Activated CD8-positive, alpha-beta T cell treated with anti-CD3 and anti-CD28 coated beads, Interleukin-2, amount 10 ng/mL, durations not matched to agents 7 days and 5 days (primary cell): ENCODE measurements at regions of chr3 and their contacts with region 1.

Region 1: GRCh38 chr3:156674046-156674910 is at the start of gene TIPARP:
- DNase-seq: peak; percentile 99
- ATAC-seq: peak; percentile 81
- H3K4me3 Mint-ChIP-seq: peak within 1 kb of the TSS; percentile 95
- H3K27ac Mint-ChIP-seq: peak within 1 kb of the TSS; percentile 98
- H3K4me1 Mint-ChIP-seq: peaks cover 41% of the 10 kb centered on the region
- H3K27me3 Mint-ChIP-seq: no peaks in the 10 kb centered on the region
- total RNA-seq, gene TIPARP: 34.2 to 36.5 TPM

Region 2: DNA sequence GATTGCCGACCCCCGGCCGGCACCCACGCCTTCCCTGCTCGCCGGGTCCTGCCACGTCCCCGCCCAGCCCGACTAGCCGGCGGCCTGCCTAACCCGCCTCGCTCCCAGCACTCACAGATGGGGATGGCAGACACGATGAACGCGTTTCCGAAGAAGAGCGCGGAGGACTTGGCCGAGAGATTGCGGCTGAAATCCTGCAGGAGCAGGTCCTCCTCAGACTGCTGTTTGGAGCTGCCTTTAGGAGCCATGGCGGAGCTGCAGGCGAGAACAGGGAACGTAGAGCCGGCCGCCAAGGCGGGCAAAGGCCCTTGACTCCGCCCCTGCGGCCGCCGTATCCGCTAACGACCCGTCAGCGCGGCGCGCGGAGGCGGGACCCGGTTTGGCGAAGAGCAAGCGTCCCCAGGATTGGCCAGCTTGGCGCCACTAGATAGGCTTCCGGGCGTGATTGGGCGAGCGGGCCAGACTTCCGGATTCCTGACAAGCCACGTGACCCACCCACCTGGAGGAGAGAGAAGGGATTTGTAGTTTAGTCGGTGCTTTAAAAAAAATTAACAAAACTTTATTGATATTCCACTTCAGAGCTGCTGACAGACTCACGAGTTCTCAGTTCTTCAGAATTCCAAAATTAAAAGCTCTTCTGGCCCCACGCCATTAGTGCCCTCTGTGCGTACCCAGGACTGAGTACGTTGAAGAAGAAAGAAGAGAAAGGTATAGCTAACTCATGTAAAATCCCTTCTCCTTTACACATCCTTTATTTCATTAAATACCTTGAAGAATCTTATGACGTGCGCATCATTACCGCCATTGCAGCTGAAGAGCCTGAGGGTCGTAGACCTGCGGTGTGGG is 119.2 kb before region 1 on chr3 and contains the start of gene SSR3:
- CTCF ChIA-PET with region 1: interaction called, 45 read pairs
- POLR2A ChIA-PET with region 1: interaction called, 41 read pairs
- DNase-seq: peak; percentile 99
- ATAC-seq: peak; percentile 100
- H3K4me3 Mint-ChIP-seq: peak within 1 kb of the TSS; percentile 97
- H3K27ac Mint-ChIP-seq: peak within 1 kb of the TSS; percentile 93
- H3K4me1 Mint-ChIP-seq: peaks cover 49% of the 10 kb centered on the region
- H3K27me3 Mint-ChIP-seq: no peaks in the 10 kb centered on the region
- total RNA-seq, gene SSR3: 133 to 147 TPM

Region 3: DNA sequence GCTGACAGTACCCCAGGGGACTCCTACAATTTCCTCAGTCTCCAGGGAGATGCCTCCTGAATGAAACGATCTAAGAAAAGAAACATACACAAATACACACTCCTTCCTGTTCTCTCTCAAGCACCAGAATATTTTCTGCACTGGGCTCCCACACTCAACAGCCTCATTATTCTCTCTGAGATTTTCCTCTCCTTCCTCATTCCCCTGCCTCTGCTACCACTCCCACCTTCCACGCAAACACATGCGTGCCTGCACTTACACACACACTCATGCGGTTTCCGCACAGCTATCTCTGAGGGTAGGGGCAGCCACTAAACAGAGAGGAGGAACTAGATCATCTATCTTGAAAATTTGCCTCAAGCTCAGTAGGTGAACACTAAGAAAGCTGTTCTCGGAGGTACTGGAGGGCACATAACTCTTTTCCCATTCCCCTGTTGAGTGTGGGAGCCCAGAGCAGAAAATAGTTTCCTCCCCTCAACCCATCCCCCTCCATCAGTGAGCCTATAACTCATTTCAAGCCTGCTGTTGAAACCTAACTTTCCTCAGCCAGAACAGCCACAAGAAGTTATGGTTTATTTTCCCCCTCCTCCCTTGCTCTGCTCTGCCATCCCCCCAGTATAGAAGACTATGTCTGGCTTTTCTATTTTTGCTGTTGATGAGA is 30.4 kb before region 1 on chr3:
- CTCF ChIA-PET with region 1: interaction called, 35 read pairs
- POLR2A ChIA-PET with region 1: interaction called, 8 read pairs
- DNase-seq: peak; percentile 74
- ATAC-seq: peak; percentile 92
- H3K4me3 Mint-ChIP-seq: peak overlapping the region; percentile 48
- H3K27ac Mint-ChIP-seq: peak overlapping the region; percentile 85
- H3K4me1 Mint-ChIP-seq: peaks cover 31% of the 10 kb centered on the region
- H3K27me3 Mint-ChIP-seq: peaks cover 2% of the 10 kb centered on the region

Region 4: GRCh38 chr3:156705761-156706631 is 31.7 kb after region 1 on chr3:
- CTCF ChIA-PET with region 1: no interaction called
- POLR2A ChIA-PET with region 1: no interaction called
- DNase-seq: no peak
- ATAC-seq: no peak
- H3K4me3 Mint-ChIP-seq: no peak overlapping the region
- H3K27ac Mint-ChIP-seq: no peak overlapping the region
- H3K4me1 Mint-ChIP-seq: peaks cover 44% of the 10 kb centered on the region
- H3K27me3 Mint-ChIP-seq: no peaks in the 10 kb centered on the region

Region 5: GRCh38 chr3:156816800-156817645 is 142.7 kb after region 1 on chr3:
- CTCF ChIA-PET with region 1: interaction called, 6 read pairs
- POLR2A ChIA-PET with region 1: interaction called, 14 read pairs
- DNase-seq: peak; percentile 93
- ATAC-seq: peak; percentile 86
- H3K4me3 Mint-ChIP-seq: peak overlapping the region; percentile 88
- H3K27ac Mint-ChIP-seq: peak overlapping the region; percentile 97
- H3K4me1 Mint-ChIP-seq: peaks cover 71% of the 10 kb centered on the region
- H3K27me3 Mint-ChIP-seq: no peaks in the 10 kb centered on the region

Region 6: DNA sequence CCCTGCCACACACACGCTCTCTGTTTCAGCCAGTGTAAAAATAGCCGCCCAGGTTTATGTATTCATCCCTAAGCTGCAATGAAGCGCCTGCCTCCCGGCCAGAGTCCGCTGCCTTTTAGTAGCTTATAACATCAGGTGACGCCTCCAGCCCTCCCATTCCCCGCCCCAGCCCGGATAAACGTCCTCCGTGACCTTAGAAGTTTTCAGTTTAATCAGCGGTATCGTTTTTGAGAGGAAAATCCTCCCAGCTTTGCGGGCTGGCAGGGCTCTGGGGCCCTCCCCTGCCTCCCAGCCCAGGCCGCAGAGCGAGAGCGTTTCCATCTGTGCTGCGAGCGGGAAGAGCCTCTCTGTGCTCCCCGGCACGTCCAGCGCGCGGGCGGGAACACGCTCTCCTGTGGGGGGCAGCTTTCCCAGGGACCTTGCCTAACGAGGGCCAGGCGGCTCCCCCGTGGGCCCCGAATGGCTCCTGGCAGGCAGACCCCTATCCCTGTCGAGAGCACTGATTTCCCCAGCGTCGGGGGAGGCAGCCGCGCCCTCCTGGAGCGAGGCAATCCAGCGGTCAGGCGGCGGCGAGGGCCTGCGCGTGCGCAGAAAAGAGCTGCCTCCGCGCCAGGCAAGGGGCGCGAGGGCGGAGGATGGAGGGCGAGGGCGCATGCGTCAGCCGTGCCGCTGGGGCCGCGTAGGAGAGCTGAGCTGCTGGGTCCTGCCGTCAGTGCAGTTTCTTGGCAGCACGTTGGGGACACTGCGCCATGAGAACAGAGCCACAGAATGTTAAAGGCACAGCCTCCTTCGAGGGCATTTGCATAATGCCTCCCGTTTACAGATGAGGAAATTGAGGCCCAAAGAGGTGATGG is 414.6 kb after region 1 on chr3:
- CTCF ChIA-PET with region 1: interaction called, 33 read pairs
- POLR2A ChIA-PET with region 1: interaction called, 16 read pairs
- DNase-seq: peak; percentile 95
- ATAC-seq: peak; percentile 96
- H3K4me3 Mint-ChIP-seq: peak overlapping the region; percentile 80
- H3K27ac Mint-ChIP-seq: peak overlapping the region; percentile 94
- H3K4me1 Mint-ChIP-seq: peaks cover 51% of the 10 kb centered on the region
- H3K27me3 Mint-ChIP-seq: no peaks in the 10 kb centered on the region

Region 7: GRCh38 chr3:157136647-157137387 is 462.5 kb after region 1 on chr3:
- CTCF ChIA-PET with region 1: interaction called, 140 read pairs
- POLR2A ChIA-PET with region 1: interaction called, 18 read pairs
- DNase-seq: no peak
- ATAC-seq: peak; percentile 3
- H3K4me3 Mint-ChIP-seq: no peak overlapping the region
- H3K27ac Mint-ChIP-seq: peak overlapping the region; percentile 64
- H3K4me1 Mint-ChIP-seq: peaks cover 59% of the 10 kb centered on the region
- H3K27me3 Mint-ChIP-seq: no peaks in the 10 kb centered on the region